ENCODE measurements at regions of chr4 and their contacts with region 1.

Region 1: GRCh38 chr4:94595879-94596483 is 144.2 kb downstream of the PDLIM5 start:
- DNase-seq: no peak
- H3K4me3 ChIP-seq: no peak overlapping the region
- H3K27ac ChIP-seq: no peak overlapping the region
- H3K4me1 ChIP-seq: no peaks in the 10 kb centered on the region
- H3K27me3 ChIP-seq: no peaks in the 10 kb centered on the region
- CTCF ChIP-seq: peak; percentile 50 to 71 (median 63)
- EP300 ChIP-seq: no peak
- POLR2A ChIP-seq: no peak

Region 2: DNA sequence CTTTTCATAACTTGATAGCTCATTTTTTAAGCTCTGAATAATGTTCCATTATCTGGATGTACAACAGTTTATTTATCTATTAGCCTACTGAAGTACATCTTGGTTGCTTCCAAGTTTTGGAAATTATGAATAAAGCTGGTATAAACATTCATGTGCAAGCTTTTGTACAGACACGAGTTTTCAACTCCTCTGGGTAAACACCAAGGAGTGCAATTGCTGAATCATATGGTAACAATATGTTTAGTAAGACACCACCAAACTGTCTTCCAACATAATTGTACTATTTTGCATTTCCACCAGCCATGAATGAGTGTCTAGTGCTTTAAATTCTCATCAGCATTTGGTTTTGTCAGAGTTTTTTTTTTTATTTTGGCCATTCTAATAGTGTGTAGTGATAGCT is 1034.1 kb before region 1 on chr4:
- in situ Hi-C with region 1: no loop called
- intact Hi-C with region 1: no loop called
- DNase-seq: no peak
- H3K4me3 ChIP-seq: no peak overlapping the region
- H3K27ac ChIP-seq: no peak overlapping the region
- H3K4me1 ChIP-seq: no peaks in the 10 kb centered on the region
- H3K27me3 ChIP-seq: no peaks in the 10 kb centered on the region
- CTCF ChIP-seq: no peak
- EP300 ChIP-seq: no peak
- POLR2A ChIP-seq: no peak

Region 3: GRCh38 chr4:94406668-94407437 is 189.1 kb before region 1 on chr4:
- in situ Hi-C with region 1: loop called (anchors 5 to 10 kb)
- intact Hi-C with region 1: loop called (anchors 2 kb)
- DNase-seq: peak; percentile 74
- H3K4me3 ChIP-seq: no peak overlapping the region
- H3K27ac ChIP-seq: no peak overlapping the region
- H3K4me1 ChIP-seq: no peaks in the 10 kb centered on the region
- H3K27me3 ChIP-seq: no peaks in the 10 kb centered on the region
- CTCF ChIP-seq: peak; percentile 70 to 91 (median 81)
- EP300 ChIP-seq: no peak
- POLR2A ChIP-seq: no peak

Region 4: GRCh38 chr4:94451695-94452475 is 144.1 kb before region 1 on chr4 and contains the start of gene PDLIM5:
- in situ Hi-C with region 1: no loop called
- intact Hi-C with region 1: loop called (anchors 10 kb)
- DNase-seq: peak; percentile 93
- H3K4me3 ChIP-seq: peak within 1 kb of the TSS; percentile 84 to 100 (median 94)
- H3K27ac ChIP-seq: peak within 1 kb of the TSS; percentile 97 to 100 (median 99)
- H3K4me1 ChIP-seq: peaks cover 9 to 55% (median 24%) of the 10 kb centered on the region in 4 donors
- H3K27me3 ChIP-seq: no peaks in the 10 kb centered on the region
- CTCF ChIP-seq: no peak
- EP300 ChIP-seq: no peak
- POLR2A ChIP-seq: peak; percentile 99
- total RNA-seq, gene PDLIM5: 62.9 to 133 (median 110) TPM

Region 5: GRCh38 chr4:94615451-94615850 is 19.5 kb after region 1 on chr4:
- in situ Hi-C with region 1: no loop called
- intact Hi-C with region 1: no loop called
- DNase-seq: no peak
- H3K4me3 ChIP-seq: no peak overlapping the region
- H3K27ac ChIP-seq: no peak overlapping the region
- H3K4me1 ChIP-seq: peaks cover 0 to 7% (median 2%) of the 10 kb centered on the region in 4 donors
- H3K27me3 ChIP-seq: no peaks in the 10 kb centered on the region
- CTCF ChIP-seq: no peak
- EP300 ChIP-seq: no peak
- POLR2A ChIP-seq: no peak

Region 6: DNA sequence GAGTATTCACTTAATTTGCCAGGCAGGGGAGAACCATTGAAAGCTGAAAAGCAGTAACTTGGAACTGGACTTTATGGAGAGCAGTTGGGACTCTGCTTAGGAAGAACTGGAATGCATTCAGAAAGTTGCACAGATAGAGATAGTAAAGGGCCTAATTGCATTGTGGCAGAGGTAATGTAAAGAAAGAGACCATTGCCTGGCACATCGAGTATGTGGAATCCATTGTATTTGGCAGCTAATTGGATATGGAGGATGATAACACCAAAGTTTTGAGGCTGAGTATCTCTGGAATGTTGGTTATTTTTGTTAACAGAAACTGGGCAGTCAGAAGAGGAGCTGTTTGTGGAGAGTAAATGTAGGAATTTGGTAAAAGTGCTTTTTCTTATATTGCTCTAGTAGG is 331.7 kb after region 1 on chr4:
- in situ Hi-C with region 1: no loop called
- intact Hi-C with region 1: no loop called
- DNase-seq: no peak
- H3K4me3 ChIP-seq: no peak overlapping the region
- H3K27ac ChIP-seq: no peak overlapping the region
- H3K4me1 ChIP-seq: no peaks in the 10 kb centered on the region
- H3K27me3 ChIP-seq: no peaks in the 10 kb centered on the region
- CTCF ChIP-seq: no peak
- EP300 ChIP-seq: no peak
- POLR2A ChIP-seq: no peak